ENCODE measurements at regions of chr1 and their contacts with region 1.

Region 1: DNA sequence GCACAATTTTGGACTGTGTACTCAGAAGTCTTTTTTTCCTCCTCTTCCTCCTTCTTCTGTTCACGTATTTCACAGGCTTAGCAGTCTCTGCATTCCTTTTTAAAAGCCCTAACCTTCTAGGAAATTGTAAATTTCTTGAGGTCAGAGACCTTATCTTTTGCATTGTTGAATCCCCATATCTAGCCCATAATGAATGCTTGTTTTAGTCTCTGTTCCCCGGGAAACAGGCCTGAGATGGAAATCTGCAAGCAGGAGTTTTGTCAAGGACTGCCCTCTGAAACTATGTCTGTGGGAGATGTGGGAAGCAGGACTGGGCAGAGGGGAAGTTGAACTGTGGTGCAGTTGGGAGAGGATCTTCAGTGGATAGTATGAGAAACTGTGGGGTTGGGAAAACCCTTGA is 272.2 kb upstream of the DAB1 start:
- DNase-seq: no peak
- H3K4me3 ChIP-seq: no peak overlapping the region
- H3K27ac ChIP-seq: no peak overlapping the region
- H3K4me1 ChIP-seq: peaks cover 5% of the 10 kb centered on the region
- H3K27me3 ChIP-seq: no peaks in the 10 kb centered on the region
- CTCF ChIP-seq: no peak

Region 2: GRCh38 chr1:57384901-57385300 is 311.1 kb before region 1 on chr1:
- CTCF ChIA-PET with region 1: no interaction called
- POLR2A ChIA-PET with region 1: interaction called, 10 read pairs
- intact Hi-C with region 1: no loop called
- DNase-seq: no peak
- H3K4me3 ChIP-seq: no peak overlapping the region
- H3K27ac ChIP-seq: peak overlapping the region; percentile 49
- H3K4me1 ChIP-seq: peaks cover 27% of the 10 kb centered on the region
- H3K27me3 ChIP-seq: no peaks in the 10 kb centered on the region
- CTCF ChIP-seq: no peak